ENCODE measurements at regions of chr2 and their contacts with region 1.

Region 1: GRCh38 chr2:10448208-10448645 is at the start of gene ODC1:
- DNase-seq: peak; percentile 90
- H3K4me3 Mint-ChIP-seq: peak within 1 kb of the TSS; percentile 100
- H3K27ac Mint-ChIP-seq: peak within 1 kb of the TSS; percentile 98
- H3K4me1 Mint-ChIP-seq: peaks cover 45% of the 10 kb centered on the region
- H3K27me3 Mint-ChIP-seq: peaks cover 1% of the 10 kb centered on the region
- total RNA-seq, gene ODC1: 235 and 247 TPM in 2 replicates

Region 2: GRCh38 chr2:9003616-9004337 is 1444.5 kb before region 1 on chr2 and contains the start of gene MBOAT2:
- intact Hi-C with region 1: loop called (anchors 5 kb)
- DNase-seq: peak; percentile 79
- H3K4me3 Mint-ChIP-seq: peak within 1 kb of the TSS; percentile 84
- H3K27ac Mint-ChIP-seq: peak within 1 kb of the TSS; percentile 65
- H3K4me1 Mint-ChIP-seq: peaks cover 23% of the 10 kb centered on the region
- H3K27me3 Mint-ChIP-seq: peaks cover 19% of the 10 kb centered on the region
- total RNA-seq, gene MBOAT2: 2.9 and 4.5 TPM in 2 replicates

Region 3: DNA sequence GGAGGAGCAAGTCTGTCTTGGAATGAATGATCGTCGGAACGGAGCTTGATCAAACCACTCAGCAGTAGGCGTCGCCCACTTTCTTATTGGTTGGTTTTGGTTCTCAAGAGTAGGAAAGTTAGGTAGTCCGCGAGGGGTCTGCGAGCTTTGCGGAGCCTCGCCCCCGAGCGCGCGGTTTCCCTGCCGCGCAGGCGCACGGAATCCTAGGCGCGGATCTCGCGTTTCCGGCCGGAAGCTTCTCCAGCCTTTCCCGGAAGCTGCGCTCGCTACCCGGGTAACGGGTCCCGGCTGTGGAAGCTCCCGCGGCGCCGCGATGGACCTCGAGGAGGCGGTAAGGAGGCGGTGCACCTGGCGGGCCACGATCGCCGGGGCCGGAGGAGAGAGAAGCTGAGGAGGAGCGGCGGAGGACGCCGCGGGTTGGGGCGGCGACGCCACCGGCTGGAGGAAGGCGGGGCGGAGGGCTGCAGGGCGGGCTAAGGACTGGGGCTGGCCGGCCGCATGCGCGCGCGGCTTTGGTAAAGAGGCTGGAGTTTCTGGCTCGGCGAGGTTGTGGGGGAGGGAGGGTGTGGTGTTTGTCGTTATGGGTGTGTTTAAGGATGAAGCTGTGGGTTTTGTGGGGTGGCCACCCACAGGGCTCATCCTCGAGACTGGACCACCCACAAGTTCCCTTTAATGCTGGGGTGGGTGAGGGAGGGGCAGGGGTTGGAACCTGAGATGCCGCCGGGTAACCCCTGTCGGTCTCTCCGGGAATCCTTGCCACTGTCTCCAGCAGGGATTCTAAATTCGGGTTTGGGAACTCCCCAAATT is 604.8 kb before region 1 on chr2 and contains the start of gene TAF1B:
- intact Hi-C with region 1: loop called (anchors 5 kb)
- DNase-seq: peak; percentile 87
- H3K4me3 Mint-ChIP-seq: peak within 1 kb of the TSS; percentile 91
- H3K27ac Mint-ChIP-seq: peak within 1 kb of the TSS; percentile 93
- H3K4me1 Mint-ChIP-seq: peaks cover 46% of the 10 kb centered on the region
- H3K27me3 Mint-ChIP-seq: no peaks in the 10 kb centered on the region
- total RNA-seq, gene TAF1B: 23.3 and 25.1 TPM in 2 replicates

Region 4: DNA sequence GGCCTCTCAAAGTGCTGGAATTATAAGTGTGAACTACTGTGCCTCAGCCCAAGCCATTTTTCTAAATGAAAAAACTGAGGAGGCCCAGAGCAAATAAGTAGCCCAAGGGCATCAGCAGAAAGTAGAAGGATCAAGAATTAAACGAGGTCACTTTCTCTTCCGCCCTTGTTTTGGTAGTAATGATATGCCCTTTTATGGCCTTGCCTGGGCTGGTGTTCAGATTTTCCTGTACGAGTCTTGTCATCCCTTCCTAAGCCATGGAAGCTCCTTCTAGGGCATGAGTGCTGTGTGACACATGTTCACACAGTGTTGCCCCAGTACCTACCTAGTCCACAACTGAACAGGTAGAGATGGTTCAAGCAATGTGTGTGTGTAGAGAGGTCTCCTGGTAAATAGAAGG is 138.9 kb before region 1 on chr2:
- intact Hi-C with region 1: no loop called
- DNase-seq: no peak
- H3K4me3 Mint-ChIP-seq: no peak overlapping the region
- H3K27ac Mint-ChIP-seq: no peak overlapping the region
- H3K4me1 Mint-ChIP-seq: peaks cover 48% of the 10 kb centered on the region
- H3K27me3 Mint-ChIP-seq: peaks cover 4% of the 10 kb centered on the region

Region 5: DNA sequence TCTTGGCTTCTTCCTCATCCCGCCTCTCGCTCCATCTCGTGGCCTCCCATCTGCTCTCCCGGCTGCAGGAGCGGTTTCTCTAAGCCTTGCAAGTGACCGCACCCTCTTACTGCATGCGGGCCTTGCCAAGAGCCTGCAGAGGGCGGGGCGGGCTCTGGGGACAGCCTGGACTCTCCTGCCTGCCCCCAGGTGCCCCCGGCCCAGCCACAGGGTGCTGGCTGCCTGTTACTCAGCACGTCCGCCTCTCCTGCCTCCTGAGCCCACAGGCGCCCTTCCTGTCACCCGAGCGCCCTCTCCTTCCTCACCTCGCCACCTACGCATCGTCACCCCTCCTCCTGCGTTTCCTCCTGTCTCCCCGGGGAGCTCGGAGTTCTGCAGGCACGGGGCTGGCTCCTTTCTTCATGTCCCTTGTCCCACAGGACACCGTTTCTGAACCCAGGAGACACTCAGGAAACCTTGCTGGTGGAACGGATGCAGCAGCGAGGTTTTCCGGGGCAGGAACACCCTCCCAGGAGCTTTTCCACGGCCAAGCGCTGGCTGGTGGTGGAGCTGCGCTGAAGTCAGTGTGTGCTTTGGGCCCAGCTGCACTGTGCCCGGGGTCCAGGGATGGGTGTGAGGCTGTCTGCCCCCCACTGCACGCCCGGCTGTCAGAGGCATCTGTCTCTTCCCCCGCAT is 117.1 kb before region 1 on chr2:
- intact Hi-C with region 1: loop called (anchors 2 kb)
- DNase-seq: peak; percentile 62
- H3K4me3 Mint-ChIP-seq: peak overlapping the region; percentile 86
- H3K27ac Mint-ChIP-seq: peak overlapping the region; percentile 95
- H3K4me1 Mint-ChIP-seq: peaks cover 59% of the 10 kb centered on the region
- H3K27me3 Mint-ChIP-seq: no peaks in the 10 kb centered on the region

Region 6: DNA sequence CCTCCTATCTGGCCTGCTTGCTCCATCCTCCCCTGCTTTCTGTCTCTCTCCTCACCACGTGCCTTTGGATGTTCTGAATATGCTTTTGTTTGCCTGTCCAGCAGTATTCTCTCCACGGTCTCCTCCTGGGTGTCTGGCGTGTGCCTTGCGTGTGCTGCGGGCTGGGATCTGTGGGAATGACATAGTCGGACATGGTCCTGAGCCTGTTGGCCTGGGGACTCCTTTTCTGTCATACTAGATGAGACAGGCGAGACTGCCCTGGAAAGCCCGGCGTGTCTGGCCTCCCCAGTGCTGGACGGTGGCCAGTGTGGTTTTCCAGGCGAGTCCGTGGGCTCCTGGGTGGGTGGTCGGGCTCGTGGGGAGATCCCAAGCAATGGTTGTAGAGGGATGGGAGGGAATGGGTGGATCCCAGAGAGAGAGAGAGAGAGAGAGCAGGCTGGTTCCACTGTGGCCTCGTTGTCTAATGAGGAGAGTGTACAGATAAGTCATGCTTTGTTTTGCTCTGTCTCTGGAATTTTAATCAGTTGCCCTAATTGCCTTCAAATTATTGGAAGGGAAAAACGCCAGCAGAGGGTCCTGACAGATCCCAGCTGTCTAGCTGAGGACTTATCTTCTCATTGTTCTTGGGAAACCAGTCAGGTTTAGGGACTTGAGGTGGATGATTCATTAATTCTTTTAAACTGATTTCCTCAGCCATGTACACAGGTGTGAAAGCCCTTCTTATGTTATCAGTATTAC is 87.2 kb before region 1 on chr2:
- intact Hi-C with region 1: no loop called
- DNase-seq: no peak
- H3K4me3 Mint-ChIP-seq: no peak overlapping the region
- H3K27ac Mint-ChIP-seq: no peak overlapping the region
- H3K4me1 Mint-ChIP-seq: peaks cover 2% of the 10 kb centered on the region
- H3K27me3 Mint-ChIP-seq: no peaks in the 10 kb centered on the region

Region 7: GRCh38 chr2:10538224-10538894 is 90.1 kb after region 1 on chr2:
- intact Hi-C with region 1: loop called (anchors 1 kb)
- DNase-seq: no peak
- H3K4me3 Mint-ChIP-seq: peak overlapping the region; percentile 26
- H3K27ac Mint-ChIP-seq: peak overlapping the region; percentile 63
- H3K4me1 Mint-ChIP-seq: peaks cover 28% of the 10 kb centered on the region
- H3K27me3 Mint-ChIP-seq: peaks cover 7% of the 10 kb centered on the region

Region 8: DNA sequence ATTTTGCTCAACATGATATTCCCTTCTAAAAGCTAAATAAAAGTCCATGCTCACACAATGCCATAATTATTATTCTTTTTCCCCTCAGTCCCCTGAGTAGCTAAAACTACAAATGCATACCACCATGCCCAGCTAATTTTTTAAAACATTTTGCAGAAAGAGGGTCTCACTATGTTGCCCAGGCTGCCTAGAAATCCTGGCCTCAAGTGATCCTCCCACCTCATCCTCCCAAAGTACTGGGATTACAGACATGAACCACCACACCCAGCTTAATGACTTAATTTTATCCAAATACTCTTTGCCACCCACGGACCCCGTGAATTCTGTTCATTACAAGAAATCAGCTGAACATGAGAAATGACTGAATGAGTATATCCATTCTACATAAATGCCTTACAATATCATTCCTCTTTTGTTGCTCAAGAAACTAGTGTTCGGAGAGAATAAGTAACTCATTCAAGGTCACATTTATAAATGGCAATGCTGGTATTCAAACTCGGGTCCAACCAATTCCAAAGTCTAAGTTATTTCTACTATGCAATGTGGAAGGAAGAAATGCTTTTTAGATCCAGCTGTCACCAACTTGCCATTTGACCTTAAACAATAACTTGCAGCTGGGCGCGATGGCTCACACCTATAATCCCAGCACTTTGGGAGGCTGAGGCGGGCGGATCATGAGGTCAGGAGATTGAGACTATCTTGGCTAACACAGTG is 181.7 kb after region 1 on chr2:
- intact Hi-C with region 1: no loop called
- DNase-seq: no peak
- H3K4me3 Mint-ChIP-seq: no peak overlapping the region
- H3K27ac Mint-ChIP-seq: no peak overlapping the region
- H3K4me1 Mint-ChIP-seq: peaks cover 25% of the 10 kb centered on the region
- H3K27me3 Mint-ChIP-seq: no peaks in the 10 kb centered on the region

Region 9: GRCh38 chr2:10668402-10669012 is 220.3 kb after region 1 on chr2:
- intact Hi-C with region 1: loop called (anchors 1 kb)
- DNase-seq: no peak
- H3K4me3 Mint-ChIP-seq: no peak overlapping the region
- H3K27ac Mint-ChIP-seq: no peak overlapping the region
- H3K4me1 Mint-ChIP-seq: peaks cover 5% of the 10 kb centered on the region
- H3K27me3 Mint-ChIP-seq: no peaks in the 10 kb centered on the region

Measured in activated T-helper 1 cell treated with anti-CD3 and anti-CD28 coated beads, Interleukin-12 subunit alpha, Interleukin-12 subunit beta, Interleukin-2, Interleukin-4 antibody, amounts not matched to agents 30 ng/mL and 10 ng/mL and 1 ng/mL, durations not matched to agents 14 hours and 24 hours and 36 hours (primary cell).